ENCODE measurements at regions of chr10 and their contacts with region 1.

Region 1: DNA sequence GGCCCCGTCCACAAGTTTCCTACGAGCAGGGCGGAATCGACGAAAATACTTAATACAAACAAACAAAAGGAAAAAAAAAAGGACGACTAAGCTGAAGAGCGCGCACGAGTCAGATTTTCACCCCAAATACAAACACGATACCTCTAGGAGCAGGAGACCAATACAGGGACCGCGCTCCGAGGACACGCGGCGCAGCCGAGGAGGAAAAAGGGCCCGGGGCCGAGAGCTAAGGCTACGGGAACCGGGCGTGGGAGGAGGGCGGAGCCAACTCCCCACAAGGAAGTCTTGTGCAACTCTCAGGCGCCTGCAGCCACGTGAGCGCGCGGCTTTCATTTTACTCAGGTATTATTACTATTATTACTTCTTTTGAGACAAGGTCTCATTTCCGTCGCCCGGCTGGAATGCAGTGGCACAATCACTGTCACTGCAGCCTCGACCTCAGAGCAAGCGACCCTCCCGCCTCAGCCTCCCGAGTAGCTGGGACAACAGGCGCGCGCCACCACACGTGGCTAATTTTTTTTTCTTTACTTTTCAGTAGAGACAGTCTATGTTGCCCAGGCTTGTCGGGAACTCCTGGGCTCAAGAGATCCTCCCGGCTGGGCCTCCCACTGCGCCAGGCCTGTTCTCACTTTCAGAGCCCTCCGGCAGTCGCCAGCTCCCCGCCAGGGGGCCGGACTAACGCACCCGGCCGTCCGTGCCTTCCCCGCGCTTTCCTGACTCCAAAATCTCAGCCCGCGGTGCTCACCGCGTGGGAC is 1.2 kb downstream of the HNRNPF start:
- DNase-seq: peak; percentile 94
- H3K4me3 Mint-ChIP-seq: peak overlapping the region; percentile 89
- H3K27ac Mint-ChIP-seq: peak overlapping the region; percentile 99
- H3K4me1 Mint-ChIP-seq: peaks cover 24% of the 10 kb centered on the region
- H3K27me3 Mint-ChIP-seq: no peaks in the 10 kb centered on the region
- CTCF ChIP-seq: no peak

Region 2: DNA sequence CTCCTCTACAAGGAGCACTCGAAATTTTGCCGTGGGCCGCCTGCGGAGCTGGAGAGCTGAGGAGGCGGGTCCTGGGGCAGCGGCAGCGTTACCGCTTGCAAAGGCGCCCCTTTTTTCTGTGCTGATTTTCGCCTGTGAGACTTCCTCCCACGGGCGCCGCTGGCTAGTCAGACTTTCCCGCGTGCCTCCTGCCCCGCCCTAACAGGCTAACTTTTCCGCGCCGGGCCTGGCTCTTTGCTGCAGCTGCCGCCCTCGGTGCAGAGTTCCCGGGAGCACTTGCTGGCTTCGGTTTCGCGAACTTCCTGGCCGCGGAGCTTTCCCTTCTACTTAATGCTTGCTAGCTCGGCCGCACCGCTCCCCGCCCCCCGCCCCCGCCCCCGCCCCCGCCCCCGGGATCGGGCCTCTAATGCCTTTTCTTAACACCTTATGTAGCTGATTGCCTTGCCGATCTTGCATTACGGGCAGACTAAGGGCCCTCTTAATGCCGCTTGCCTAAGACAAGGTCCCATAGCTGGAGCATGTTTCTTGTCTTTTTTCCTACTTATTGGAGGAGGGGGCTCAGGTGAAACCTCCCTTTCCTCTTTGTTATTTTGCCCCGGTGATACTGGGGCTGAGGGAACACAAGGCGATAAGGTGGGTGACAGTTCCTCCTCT is 102.9 kb before region 1 on chr10:
- CTCF ChIA-PET with region 1: no interaction called
- POLR2A ChIA-PET with region 1: no interaction called
- intact Hi-C with region 1: no loop called
- DNase-seq: peak; percentile 28
- H3K4me3 Mint-ChIP-seq: peak overlapping the region; percentile 52
- H3K27ac Mint-ChIP-seq: no peak overlapping the region
- H3K4me1 Mint-ChIP-seq: no peaks in the 10 kb centered on the region
- H3K27me3 Mint-ChIP-seq: peaks cover 32% of the 10 kb centered on the region
- CTCF ChIP-seq: no peak

Region 3: GRCh38 chr10:43396928-43397624 is 10.7 kb before region 1 on chr10:
- CTCF ChIA-PET with region 1: interaction called, 4 read pairs
- POLR2A ChIA-PET with region 1: interaction called, 169 read pairs
- intact Hi-C with region 1: loop called (anchors 1 kb)
- DNase-seq: peak; percentile 92
- H3K4me3 Mint-ChIP-seq: peak overlapping the region; percentile 73
- H3K27ac Mint-ChIP-seq: peak overlapping the region; percentile 83
- H3K4me1 Mint-ChIP-seq: peaks cover 32% of the 10 kb centered on the region
- H3K27me3 Mint-ChIP-seq: no peaks in the 10 kb centered on the region
- CTCF ChIP-seq: no peak

Region 4: GRCh38 chr10:43420369-43421200 is 12.8 kb after region 1 on chr10:
- CTCF ChIA-PET with region 1: interaction called, 5 read pairs
- POLR2A ChIA-PET with region 1: interaction called, 74 read pairs
- intact Hi-C with region 1: no loop called
- DNase-seq: peak; percentile 83
- H3K4me3 Mint-ChIP-seq: peak overlapping the region; percentile 85
- H3K27ac Mint-ChIP-seq: peak overlapping the region; percentile 93
- H3K4me1 Mint-ChIP-seq: peaks cover 13% of the 10 kb centered on the region
- H3K27me3 Mint-ChIP-seq: no peaks in the 10 kb centered on the region
- CTCF ChIP-seq: no peak

Region 5: GRCh38 chr10:43436400-43437140 is 28.8 kb after region 1 on chr10 and contains the start of gene ZNF487:
- CTCF ChIA-PET with region 1: interaction called, 4 read pairs
- POLR2A ChIA-PET with region 1: interaction called, 30 read pairs
- intact Hi-C with region 1: loop called (anchors 1 kb)
- DNase-seq: peak; percentile 84
- H3K4me3 Mint-ChIP-seq: peak within 1 kb of the TSS; percentile 96
- H3K27ac Mint-ChIP-seq: peak within 1 kb of the TSS; percentile 99
- H3K4me1 Mint-ChIP-seq: peaks cover 6% of the 10 kb centered on the region
- H3K27me3 Mint-ChIP-seq: no peaks in the 10 kb centered on the region
- CTCF ChIP-seq: no peak
- total RNA-seq, gene ZNF487: 2.2 and 2.6 TPM in 2 replicates

Region 6: GRCh38 chr10:43444313-43444712 is 36.6 kb after region 1 on chr10:
- CTCF ChIA-PET with region 1: interaction called, 3 read pairs
- POLR2A ChIA-PET with region 1: interaction called, 13 read pairs
- intact Hi-C with region 1: no loop called
- DNase-seq: no peak
- H3K4me3 Mint-ChIP-seq: no peak overlapping the region
- H3K27ac Mint-ChIP-seq: no peak overlapping the region
- H3K4me1 Mint-ChIP-seq: peaks cover 11% of the 10 kb centered on the region
- H3K27me3 Mint-ChIP-seq: no peaks in the 10 kb centered on the region
- CTCF ChIP-seq: no peak